ENCODE measurements at regions of chr1 and their contacts with region 1.

Region 1: GRCh38 chr1:35726450-35727433 is 8.1 kb upstream of the C1orf216 start:
- DNase-seq: peak; percentile 72
- ATAC-seq: peak; percentile 76
- H3K4me3 ChIP-seq: no peak overlapping the region
- H3K4me3 Mint-ChIP-seq: no peak overlapping the region
- H3K27ac ChIP-seq: no peak overlapping the region
- H3K27ac Mint-ChIP-seq: peak overlapping the region; percentile 26
- H3K4me1 ChIP-seq: peaks cover 0 to 6% of the 10 kb centered on the region in 2 donors
- H3K4me1 Mint-ChIP-seq: peaks cover 4% of the 10 kb centered on the region
- H3K27me3 ChIP-seq: no peaks in the 10 kb centered on the region
- H3K27me3 Mint-ChIP-seq: no peaks in the 10 kb centered on the region
- CTCF ChIP-seq: peak; percentile 87

Region 2: DNA sequence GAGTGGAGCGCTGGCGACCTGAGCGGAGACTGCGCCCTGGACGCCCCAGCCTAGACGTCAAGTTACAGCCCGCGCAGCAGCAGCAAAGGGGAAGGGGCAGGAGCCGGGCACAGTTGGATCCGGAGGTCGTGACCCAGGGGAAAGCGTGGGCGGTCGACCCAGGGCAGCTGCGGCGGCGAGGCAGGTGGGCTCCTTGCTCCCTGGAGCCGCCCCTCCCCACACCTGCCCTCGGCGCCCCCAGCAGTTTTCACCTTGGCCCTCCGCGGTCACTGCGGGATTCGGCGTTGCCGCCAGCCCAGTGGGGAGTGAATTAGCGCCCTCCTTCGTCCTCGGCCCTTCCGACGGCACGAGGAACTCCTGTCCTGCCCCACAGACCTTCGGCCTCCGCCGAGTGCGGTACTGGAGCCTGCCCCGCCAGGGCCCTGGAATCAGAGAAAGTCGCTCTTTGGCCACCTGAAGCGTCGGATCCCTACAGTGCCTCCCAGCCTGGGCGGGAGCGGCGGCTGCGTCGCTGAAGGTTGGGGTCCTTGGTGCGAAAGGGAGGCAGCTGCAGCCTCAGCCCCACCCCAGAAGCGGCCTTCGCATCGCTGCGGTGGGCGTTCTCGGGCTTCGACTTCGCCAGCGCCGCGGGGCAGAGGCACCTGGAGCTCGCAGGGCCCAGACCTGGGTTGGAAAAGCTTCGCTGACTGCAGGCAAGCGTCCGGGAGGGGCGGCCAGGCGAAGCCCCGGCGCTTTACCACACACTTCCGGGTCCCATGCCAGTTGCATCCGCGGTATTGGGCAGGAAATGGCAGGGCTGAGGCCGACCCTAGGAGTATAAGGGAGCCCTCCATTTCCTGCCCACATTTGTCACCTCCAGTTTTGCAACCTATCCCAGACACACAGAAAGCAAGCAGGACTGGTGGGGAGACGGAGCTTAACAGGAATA is 149.4 kb before region 1 on chr1:
- CTCF ChIA-PET with region 1: interaction called, 36 read pairs
- POLR2A ChIA-PET with region 1: no interaction called
- intact Hi-C with region 1: no loop called
- DNase-seq: peak; percentile 81
- ATAC-seq: peak; percentile 85
- H3K4me3 ChIP-seq: peak overlapping the region; percentile 60 to 75 (median 71)
- H3K4me3 Mint-ChIP-seq: peak overlapping the region; percentile 91
- H3K27ac ChIP-seq: peak overlapping the region; percentile 43 to 62
- H3K27ac Mint-ChIP-seq: peak overlapping the region; percentile 90
- H3K4me1 ChIP-seq: peaks cover 21 to 39% of the 10 kb centered on the region in 2 donors
- H3K4me1 Mint-ChIP-seq: peaks cover 38% of the 10 kb centered on the region
- H3K27me3 ChIP-seq: peaks cover 0 to 21% (median 6%) of the 10 kb centered on the region in 4 experiments
- H3K27me3 Mint-ChIP-seq: peaks cover 14% of the 10 kb centered on the region
- CTCF ChIP-seq: no peak

Region 3: GRCh38 chr1:35737120-35737519 is 10.4 kb after region 1 on chr1:
- CTCF ChIA-PET with region 1: interaction called, 33 read pairs
- POLR2A ChIA-PET with region 1: no interaction called
- intact Hi-C with region 1: no loop called
- DNase-seq: no peak
- ATAC-seq: no peak
- H3K4me3 ChIP-seq: no peak overlapping the region
- H3K4me3 Mint-ChIP-seq: no peak overlapping the region
- H3K27ac ChIP-seq: no peak overlapping the region
- H3K27ac Mint-ChIP-seq: peak overlapping the region; percentile 26
- H3K4me1 ChIP-seq: peaks cover 10 to 12% of the 10 kb centered on the region in 2 donors
- H3K4me1 Mint-ChIP-seq: peaks cover 10% of the 10 kb centered on the region
- H3K27me3 ChIP-seq: no peaks in the 10 kb centered on the region
- H3K27me3 Mint-ChIP-seq: no peaks in the 10 kb centered on the region
- CTCF ChIP-seq: no peak

Region 4: DNA sequence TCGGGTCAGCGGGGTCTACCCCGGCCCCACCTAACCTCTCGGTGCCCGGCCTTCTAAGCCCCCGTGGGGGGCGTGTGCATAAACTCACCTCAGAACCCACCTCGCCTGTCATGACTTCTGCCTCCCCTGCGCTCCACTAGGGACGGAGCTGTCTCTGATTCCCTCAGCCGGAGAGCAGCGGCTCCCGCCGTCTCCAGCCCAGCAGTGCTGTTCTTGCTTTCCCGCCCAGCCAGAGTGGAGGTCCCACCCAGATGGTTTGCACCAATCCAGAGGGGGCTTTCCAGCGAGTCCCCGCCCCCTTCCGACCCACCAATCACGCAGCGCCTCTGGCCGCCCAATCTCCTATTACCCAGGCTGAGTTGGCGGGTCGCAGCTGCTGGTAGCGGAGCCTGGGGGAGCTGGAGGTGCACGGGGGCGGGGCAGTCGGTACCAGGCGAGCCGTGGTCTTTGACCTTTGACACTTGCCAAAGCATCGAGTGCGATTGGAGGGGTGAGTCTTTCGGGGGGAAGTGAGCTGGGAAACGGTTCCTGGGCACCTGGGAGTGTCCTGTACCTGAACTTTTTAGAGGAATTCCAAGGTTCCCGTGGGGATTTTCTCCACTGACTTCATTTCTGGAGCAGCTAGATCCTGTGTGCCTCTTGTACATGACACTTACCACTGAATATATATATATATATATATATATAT is 43.2 kb after region 1 on chr1 and contains the start of gene CLSPN:
- CTCF ChIA-PET with region 1: interaction called, 46 read pairs
- POLR2A ChIA-PET with region 1: no interaction called
- intact Hi-C with region 1: loop called (anchors 1 kb)
- DNase-seq: peak; percentile 94
- ATAC-seq: peak; percentile 95
- H3K4me3 ChIP-seq: peak within 1 kb of the TSS; percentile 75 to 99 (median 87)
- H3K4me3 Mint-ChIP-seq: peak within 1 kb of the TSS; percentile 97
- H3K27ac ChIP-seq: peak within 1 kb of the TSS; percentile 51 to 83
- H3K27ac Mint-ChIP-seq: peak within 1 kb of the TSS; percentile 86
- H3K4me1 ChIP-seq: peaks cover 0 to 12% of the 10 kb centered on the region in 2 donors
- H3K4me1 Mint-ChIP-seq: peaks cover 10% of the 10 kb centered on the region
- H3K27me3 ChIP-seq: no peaks in the 10 kb centered on the region
- H3K27me3 Mint-ChIP-seq: no peaks in the 10 kb centered on the region
- CTCF ChIP-seq: no peak
- total RNA-seq, gene CLSPN: 0.85 and 1.1 TPM in 2 replicates